IMR-90 (cell line): ENCODE measurements at regions of chr19 and their contacts with region 1.

Region 1: DNA sequence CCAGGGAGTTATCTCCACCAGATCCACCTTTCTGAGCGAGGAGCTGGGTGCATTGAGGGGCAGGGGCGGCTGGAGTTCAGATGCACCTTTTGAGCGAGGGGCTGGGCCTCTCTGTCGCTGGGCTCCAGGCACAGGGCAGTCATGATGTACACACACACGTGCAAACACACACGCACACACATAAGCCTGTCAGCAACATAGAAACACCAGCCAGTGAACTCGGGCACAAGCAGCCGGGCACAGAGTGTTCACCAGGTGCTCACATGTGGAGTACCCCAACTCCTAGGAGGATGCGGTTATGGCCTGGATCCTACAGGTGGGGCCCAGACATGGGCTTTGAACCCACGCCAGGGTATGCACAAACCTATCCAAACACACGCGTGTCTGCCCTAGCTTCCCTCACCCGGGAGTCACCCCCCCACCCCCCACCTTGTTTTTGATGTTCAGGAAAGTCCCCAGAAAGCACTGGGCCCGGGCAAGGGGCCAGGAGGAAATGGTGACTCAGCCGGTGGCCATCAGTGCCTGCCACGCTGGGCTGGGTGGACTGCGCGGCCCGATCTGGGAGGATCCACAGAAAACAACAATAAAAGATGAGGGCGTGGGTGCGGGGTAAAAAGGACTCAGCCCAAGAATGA is 13.3 kb downstream of the ARRDC2 start:
- DNase-seq: peak; percentile 88
- ATAC-seq: peak; percentile 78
- H3K4me3 ChIP-seq: no peak overlapping the region
- H3K27ac ChIP-seq: peak overlapping the region; percentile 84
- H3K4me1 ChIP-seq: peaks cover 17% of the 10 kb centered on the region
- H3K27me3 ChIP-seq: no peaks in the 10 kb centered on the region
- CTCF ChIP-seq: no peak
- POLR2A ChIP-seq: 0 out of 2 replicates have a peak, but pooled peaks have one; percentile 18
- RAD21 ChIP-seq: no peak

Region 2: DNA sequence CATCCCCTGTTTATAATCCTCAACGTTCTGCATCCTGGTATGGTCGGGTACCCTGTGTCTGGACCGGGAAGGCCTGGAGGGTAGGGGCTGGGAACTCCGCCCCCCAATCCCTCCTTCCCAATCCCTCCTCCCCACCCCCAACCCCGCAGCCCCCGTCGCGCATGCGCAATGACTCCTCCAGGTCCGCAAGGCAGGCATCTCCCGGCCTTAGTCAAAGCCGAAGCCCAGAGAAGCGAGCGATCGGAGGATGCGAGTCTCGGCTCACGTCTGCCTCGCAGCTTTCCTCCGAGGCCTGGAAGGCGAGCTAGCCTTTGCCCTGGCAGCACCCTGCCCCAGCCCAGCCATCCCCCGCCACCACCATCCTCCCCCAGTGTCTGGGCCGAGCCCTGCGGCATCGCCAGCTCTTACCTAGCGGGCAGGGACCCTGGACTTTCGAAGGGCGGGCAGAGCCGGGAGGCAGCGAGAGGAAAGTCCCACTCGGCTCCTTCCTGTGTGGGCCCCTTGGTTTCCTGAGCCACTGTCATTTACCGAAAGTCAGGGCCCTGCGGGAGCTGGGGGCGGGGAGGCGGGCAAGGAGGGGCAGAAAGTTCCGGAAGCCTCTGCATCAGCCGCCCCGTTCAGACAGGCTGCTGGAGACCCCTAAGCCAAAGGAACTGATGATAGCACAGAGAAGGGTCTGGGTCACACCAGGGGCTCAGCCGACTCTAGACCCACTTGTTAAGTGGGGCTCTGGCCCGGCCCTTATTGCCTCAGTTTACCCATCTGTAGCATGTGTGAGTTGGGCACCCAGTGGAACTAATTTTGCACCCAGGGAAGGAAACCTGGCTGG is 173.5 kb before region 1 on chr19 and contains the start of gene JAK3:
- CTCF ChIA-PET with region 1: no interaction called
- POLR2A ChIA-PET with region 1: interaction called, 17 read pairs
- dilution Hi-C with region 1: no loop called
- in situ Hi-C with region 1: no loop called
- intact Hi-C with region 1: no loop called
- DNase-seq: peak; percentile 46
- ATAC-seq: peak; percentile 92
- H3K4me3 ChIP-seq: peak within 1 kb of the TSS; percentile 34
- H3K27ac ChIP-seq: peak within 1 kb of the TSS; percentile 80
- H3K4me1 ChIP-seq: peaks cover 4% of the 10 kb centered on the region
- H3K27me3 ChIP-seq: peaks cover 2% of the 10 kb centered on the region; the same call in 1 of the 2 replicates
- CTCF ChIP-seq: no peak
- POLR2A ChIP-seq: no peak
- RAD21 ChIP-seq: no peak
- total RNA-seq, gene JAK3: 0.28 and 0.36 TPM in 2 replicates

Region 3: GRCh38 chr19:17865364-17866311 is 155.6 kb before region 1 on chr19:
- CTCF ChIA-PET with region 1: no interaction called
- POLR2A ChIA-PET with region 1: no interaction called
- dilution Hi-C with region 1: no loop called
- in situ Hi-C with region 1: no loop called
- intact Hi-C with region 1: no loop called
- DNase-seq: no peak
- ATAC-seq: peak; percentile 12
- H3K4me3 ChIP-seq: no peak overlapping the region
- H3K27ac ChIP-seq: no peak overlapping the region
- H3K4me1 ChIP-seq: peaks cover 7% of the 10 kb centered on the region
- H3K27me3 ChIP-seq: peaks cover 18% of the 10 kb centered on the region
- CTCF ChIP-seq: no peak
- POLR2A ChIP-seq: peak; percentile 46; the same call in 1 of the 2 replicates
- RAD21 ChIP-seq: no peak